ENCODE measurements at regions of chr12 and their contacts with region 1.

Region 1: GRCh38 chr12:47837190-47838171 is 17.8 kb upstream of the HDAC7 start:
- DNase-seq: no peak
- H3K4me3 ChIP-seq: no peak overlapping the region
- H3K27ac ChIP-seq: no peak overlapping the region
- H3K27me3 ChIP-seq: no peaks in the 10 kb centered on the region
- CTCF ChIP-seq: peak; percentile 85

Region 2: GRCh38 chr12:47616440-47616839 is 221.0 kb before region 1 on chr12:
- CTCF ChIA-PET with region 1: no interaction called
- POLR2A ChIA-PET with region 1: no interaction called
- DNase-seq: no peak
- H3K4me3 ChIP-seq: no peak overlapping the region
- H3K27ac ChIP-seq: no peak overlapping the region
- H3K27me3 ChIP-seq: no peaks in the 10 kb centered on the region
- CTCF ChIP-seq: no peak

Region 3: DNA sequence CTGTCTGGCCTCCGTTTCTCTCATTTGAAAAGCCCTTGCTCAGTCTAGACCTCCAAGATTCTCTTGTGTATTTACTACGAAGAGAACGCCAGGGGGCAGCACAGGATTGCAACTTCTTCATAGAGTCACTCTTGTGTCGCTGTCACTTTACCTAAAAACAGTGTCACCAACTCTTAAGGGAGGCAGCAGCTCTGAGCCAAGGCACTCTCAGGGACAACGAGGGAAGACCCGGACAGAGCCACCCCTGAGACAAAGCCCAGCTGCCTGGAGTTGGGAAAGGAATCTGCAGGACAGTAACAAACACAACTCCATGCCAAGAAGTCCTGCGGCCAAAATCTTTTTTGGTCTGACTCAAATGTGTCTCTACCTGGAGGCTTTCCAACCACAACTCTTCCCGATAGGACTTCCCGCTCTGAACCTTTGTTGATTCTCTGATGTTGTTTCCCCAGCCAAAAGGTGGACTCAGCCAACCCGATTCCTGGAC is 122.0 kb before region 1 on chr12:
- CTCF ChIA-PET with region 1: interaction called, 88 read pairs
- POLR2A ChIA-PET with region 1: no interaction called
- DNase-seq: no peak
- H3K4me3 ChIP-seq: 0 out of 2 replicates have a peak overlapping the region, but pooled peaks have one; percentile 25
- H3K27ac ChIP-seq: no peak overlapping the region
- H3K27me3 ChIP-seq: no peaks in the 10 kb centered on the region
- CTCF ChIP-seq: peak; percentile 80

Region 4: GRCh38 chr12:47742253-47742825 is 95.1 kb before region 1 on chr12:
- CTCF ChIA-PET with region 1: interaction called, 76 read pairs
- POLR2A ChIA-PET with region 1: interaction called, 3 read pairs
- DNase-seq: no peak
- H3K4me3 ChIP-seq: no peak overlapping the region
- H3K27ac ChIP-seq: no peak overlapping the region
- H3K27me3 ChIP-seq: peaks cover 36% of the 10 kb centered on the region
- CTCF ChIP-seq: peak; percentile 99

Region 5: GRCh38 chr12:47789712-47790489 is 47.6 kb before region 1 on chr12:
- CTCF ChIA-PET with region 1: interaction called, 16 read pairs
- POLR2A ChIA-PET with region 1: no interaction called
- DNase-seq: no peak
- H3K4me3 ChIP-seq: no peak overlapping the region
- H3K27ac ChIP-seq: no peak overlapping the region
- H3K27me3 ChIP-seq: no peaks in the 10 kb centered on the region
- CTCF ChIP-seq: no peak

Region 6: DNA sequence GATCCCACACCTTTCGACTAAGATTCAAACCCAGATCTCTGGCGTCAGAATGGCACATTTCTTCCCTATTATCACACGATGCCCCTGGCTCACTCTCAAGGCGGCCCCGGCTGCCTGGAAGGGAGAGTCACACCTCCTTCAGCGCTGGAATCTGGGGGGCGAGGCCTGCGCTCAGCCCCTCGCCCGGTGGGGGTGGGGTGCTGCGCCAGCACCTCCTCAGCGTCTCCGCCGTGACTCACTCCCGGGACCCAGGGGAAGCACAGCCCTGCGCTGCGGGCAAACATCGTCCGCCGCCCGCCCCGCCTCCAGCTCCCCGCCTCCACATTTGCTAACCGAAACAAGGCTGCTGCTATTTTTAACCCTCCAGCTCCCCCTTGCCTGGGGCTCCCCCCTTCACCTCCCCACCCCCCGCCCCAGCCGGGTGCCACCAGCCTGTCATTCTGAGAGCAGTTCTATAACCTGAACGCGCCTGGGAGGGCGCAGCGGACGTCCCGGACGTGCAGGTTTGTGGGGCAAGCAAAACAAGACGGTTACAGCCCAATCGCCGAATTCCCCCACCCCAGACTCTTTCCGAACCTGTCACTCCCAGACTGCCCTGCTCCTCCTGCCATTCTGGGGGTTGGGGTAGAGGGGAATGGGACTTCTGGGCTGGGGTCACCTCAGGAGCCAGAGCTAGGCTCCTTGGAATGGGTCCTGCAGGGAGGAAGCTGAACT is 24.5 kb before region 1 on chr12:
- CTCF ChIA-PET with region 1: interaction called, 22 read pairs
- POLR2A ChIA-PET with region 1: interaction called, 6 read pairs
- DNase-seq: no peak
- H3K4me3 ChIP-seq: peak overlapping the region; percentile 44
- H3K27ac ChIP-seq: peak overlapping the region; percentile 94
- H3K27me3 ChIP-seq: no peaks in the 10 kb centered on the region
- CTCF ChIP-seq: no peak

Region 7: GRCh38 chr12:47850153-47851084 is 12.9 kb after region 1 on chr12:
- CTCF ChIA-PET with region 1: interaction called, 24 read pairs
- POLR2A ChIA-PET with region 1: interaction called, 3 read pairs
- DNase-seq: no peak
- H3K4me3 ChIP-seq: no peak overlapping the region
- H3K27ac ChIP-seq: no peak overlapping the region
- H3K27me3 ChIP-seq: no peaks in the 10 kb centered on the region
- CTCF ChIP-seq: no peak

Region 8: DNA sequence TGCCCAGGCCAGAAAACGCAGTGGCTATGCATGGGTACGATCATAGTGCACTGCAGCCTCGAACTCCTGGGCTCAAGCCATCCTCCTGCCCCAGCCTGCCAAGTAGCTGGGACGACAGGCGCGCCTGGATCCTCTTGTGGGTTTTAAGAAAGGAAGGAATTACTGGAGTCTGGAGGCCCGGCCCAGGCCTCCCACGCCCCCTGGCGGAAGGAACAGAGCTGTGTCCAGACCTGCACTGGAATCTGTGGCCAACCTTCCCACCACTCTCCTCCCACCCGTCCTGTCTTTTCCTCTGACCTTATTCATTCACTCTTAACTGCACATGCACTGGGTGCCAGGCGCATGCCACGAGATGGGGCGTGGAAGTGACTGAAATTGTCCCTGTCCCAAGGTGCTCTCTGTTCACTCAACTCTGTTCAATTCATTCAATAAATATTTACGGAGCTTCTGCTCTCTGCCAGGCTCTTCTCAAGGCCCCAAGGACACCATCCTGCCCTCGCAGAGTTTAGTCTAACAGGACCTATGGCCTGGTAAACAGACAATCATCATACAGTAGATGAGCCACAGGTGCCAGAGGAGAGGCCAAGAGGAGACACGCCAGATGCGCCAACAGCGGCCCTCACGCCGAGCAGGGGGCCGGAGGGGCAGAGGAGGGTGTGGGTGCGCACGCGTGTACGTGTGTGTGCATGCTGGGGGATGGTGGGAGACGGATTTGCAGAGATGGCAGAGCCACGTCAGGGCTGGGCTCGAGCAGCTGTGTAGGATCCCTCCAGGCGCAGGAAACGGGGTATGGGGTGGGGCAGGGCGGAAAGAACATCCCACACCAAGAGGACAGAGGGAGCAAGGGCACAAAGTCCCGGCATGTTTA is 112.2 kb after region 1 on chr12:
- CTCF ChIA-PET with region 1: interaction called, 52 read pairs
- POLR2A ChIA-PET with region 1: interaction called, 3 read pairs
- DNase-seq: peak; percentile 55
- H3K4me3 ChIP-seq: no peak overlapping the region
- H3K27ac ChIP-seq: no peak overlapping the region
- H3K27me3 ChIP-seq: peaks cover 23% of the 10 kb centered on the region
- CTCF ChIP-seq: peak; percentile 92